CD4-positive, alpha-beta T cell (primary cell): ENCODE measurements at regions of chr1 and their contacts with region 1.

Region 1: GRCh38 chr1:105724286-105724685 is 1332.2 kb upstream of the PRMT6 start:
- DNase-seq: no peak
- ATAC-seq: no peak
- H3K4me3 ChIP-seq: no peak overlapping the region
- H3K4me3 Mint-ChIP-seq: no peak overlapping the region
- H3K27ac ChIP-seq: no peak overlapping the region
- H3K27ac Mint-ChIP-seq: no peak overlapping the region
- H3K4me1 ChIP-seq: no peaks in the 10 kb centered on the region
- H3K4me1 Mint-ChIP-seq: no peaks in the 10 kb centered on the region
- H3K27me3 ChIP-seq: no peaks in the 10 kb centered on the region
- H3K27me3 Mint-ChIP-seq: no peaks in the 10 kb centered on the region
- CTCF ChIP-seq: no peak

Region 2: GRCh38 chr1:105779727-105780126 is 55.4 kb after region 1 on chr1:
- CTCF ChIA-PET with region 1: no interaction called
- POLR2A ChIA-PET with region 1: no interaction called
- intact Hi-C with region 1: loop called in 1 of 2 experiments (anchors 10 kb)
- DNase-seq: no peak
- ATAC-seq: no peak
- H3K4me3 ChIP-seq: no peak overlapping the region
- H3K4me3 Mint-ChIP-seq: no peak overlapping the region
- H3K27ac ChIP-seq: no peak overlapping the region
- H3K27ac Mint-ChIP-seq: no peak overlapping the region
- H3K4me1 ChIP-seq: no peaks in the 10 kb centered on the region
- H3K4me1 Mint-ChIP-seq: no peaks in the 10 kb centered on the region
- H3K27me3 ChIP-seq: no peaks in the 10 kb centered on the region
- H3K27me3 Mint-ChIP-seq: no peaks in the 10 kb centered on the region
- CTCF ChIP-seq: no peak

Region 3: GRCh38 chr1:107110326-107110725 is 1386.0 kb after region 1 on chr1:
- CTCF ChIA-PET with region 1: no interaction called
- POLR2A ChIA-PET with region 1: no interaction called
- intact Hi-C with region 1: no loop called
- DNase-seq: no peak
- ATAC-seq: no peak
- H3K4me3 ChIP-seq: no peak overlapping the region
- H3K4me3 Mint-ChIP-seq: no peak overlapping the region
- H3K27ac ChIP-seq: no peak overlapping the region
- H3K27ac Mint-ChIP-seq: no peak overlapping the region
- H3K4me1 ChIP-seq: no peaks in the 10 kb centered on the region
- H3K4me1 Mint-ChIP-seq: no peaks in the 10 kb centered on the region
- H3K27me3 ChIP-seq: no peaks in the 10 kb centered on the region
- H3K27me3 Mint-ChIP-seq: peaks cover 27% of the 10 kb centered on the region
- CTCF ChIP-seq: no peak